ENCODE measurements at regions of chr11 and their contacts with region 1.

Region 1: DNA sequence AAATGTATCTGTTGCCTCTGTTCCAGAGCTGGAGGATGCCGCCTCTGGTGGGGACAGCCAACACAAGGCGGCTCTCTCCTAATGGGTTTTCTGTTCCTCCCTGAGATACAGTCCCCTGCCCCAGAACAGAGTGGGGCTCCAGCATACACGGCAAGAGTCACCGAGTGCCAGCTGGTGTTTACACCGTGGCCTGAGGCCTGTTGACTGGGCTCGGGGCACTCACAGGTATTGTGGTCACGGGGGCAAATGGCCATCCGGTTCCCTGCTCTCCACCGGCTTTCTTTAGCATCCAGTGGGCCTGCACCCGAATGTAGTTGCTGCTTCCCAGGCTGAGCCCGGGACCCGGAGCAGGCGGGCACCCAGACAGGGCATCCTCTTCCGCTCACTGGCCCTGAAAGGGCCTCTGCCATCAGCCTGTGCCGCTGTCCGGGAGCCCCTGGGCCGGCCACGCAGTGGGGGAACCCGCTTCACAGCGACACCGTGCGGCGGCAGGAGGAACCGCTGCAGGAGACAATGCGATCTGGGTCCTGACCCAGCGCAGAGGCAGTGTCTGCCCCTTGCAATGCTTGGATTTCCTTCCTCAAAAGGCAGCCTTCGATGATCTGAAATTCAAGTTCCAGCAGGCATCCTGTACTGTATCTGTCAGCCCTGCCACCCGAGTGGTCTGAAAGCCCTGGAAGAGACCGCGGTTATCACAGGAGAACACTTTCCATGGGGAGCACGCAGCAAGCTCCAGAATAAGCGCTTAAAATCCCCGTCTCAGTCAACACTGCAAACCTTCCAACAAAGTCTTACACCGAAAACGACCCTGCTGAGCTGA is 859 bp upstream of the KRTAP5-5 start:
- DNase-seq: peak; percentile 52
- ATAC-seq: peak; percentile 81
- H3K4me3 Mint-ChIP-seq: no peak overlapping the region
- H3K27ac Mint-ChIP-seq: no peak overlapping the region
- H3K4me1 Mint-ChIP-seq: peaks cover 4% of the 10 kb centered on the region
- H3K27me3 Mint-ChIP-seq: peaks cover 30% of the 10 kb centered on the region
- CTCF ChIP-seq: no peak

Region 2: DNA sequence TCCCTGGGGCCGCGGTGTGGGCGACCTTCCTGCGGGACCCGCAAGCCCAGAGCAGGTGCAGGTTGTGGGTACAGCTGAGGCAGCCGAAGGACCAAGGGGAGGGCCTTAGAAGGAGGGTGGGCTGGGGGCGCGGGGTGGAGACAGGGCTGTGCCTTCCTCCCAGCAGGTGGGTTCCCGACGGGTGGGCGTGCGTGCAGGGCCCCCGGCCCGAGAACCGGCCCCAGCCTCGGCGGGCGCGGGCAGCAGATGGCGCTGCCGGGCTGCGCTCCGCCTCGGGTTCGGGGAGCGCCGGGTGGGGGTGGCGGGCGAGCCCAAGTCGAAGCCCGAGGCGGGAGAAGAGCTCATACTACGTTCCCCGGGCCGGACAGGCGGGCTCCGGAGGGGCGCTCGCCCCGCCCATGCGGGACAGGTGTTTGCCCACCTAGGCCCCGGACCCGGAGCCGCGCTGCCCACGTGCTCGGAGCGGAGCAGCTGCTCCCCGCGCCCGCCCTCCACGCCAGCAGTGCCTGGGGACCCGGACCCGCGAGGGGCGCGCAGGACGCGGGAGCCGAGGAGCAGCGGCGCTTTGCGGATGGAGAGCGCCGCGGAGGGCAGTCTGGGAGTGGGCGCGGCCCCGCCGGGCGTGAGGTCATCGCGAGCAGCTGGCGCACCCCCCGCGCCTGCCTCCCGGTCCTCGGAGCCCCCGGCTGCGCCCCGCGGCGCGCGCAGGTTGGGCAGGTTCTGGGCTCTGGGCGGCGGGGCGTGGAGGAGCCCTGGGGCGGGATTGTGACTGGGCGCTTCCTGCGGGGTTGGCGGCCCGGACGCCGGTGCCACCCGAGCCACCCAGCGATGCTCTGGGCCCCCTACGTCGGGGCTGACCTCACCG is 81.9 kb before region 1 on chr11:
- CTCF ChIA-PET with region 1: interaction called, 3 read pairs
- POLR2A ChIA-PET with region 1: no interaction called
- intact Hi-C with region 1: loop called (anchors 2 kb)
- DNase-seq: peak; percentile 50
- ATAC-seq: peak; percentile 67
- H3K4me3 Mint-ChIP-seq: peak overlapping the region; percentile 19
- H3K27ac Mint-ChIP-seq: no peak overlapping the region
- H3K4me1 Mint-ChIP-seq: peaks cover 13% of the 10 kb centered on the region
- H3K27me3 Mint-ChIP-seq: peaks cover 28% of the 10 kb centered on the region
- CTCF ChIP-seq: no peak

Region 3: DNA sequence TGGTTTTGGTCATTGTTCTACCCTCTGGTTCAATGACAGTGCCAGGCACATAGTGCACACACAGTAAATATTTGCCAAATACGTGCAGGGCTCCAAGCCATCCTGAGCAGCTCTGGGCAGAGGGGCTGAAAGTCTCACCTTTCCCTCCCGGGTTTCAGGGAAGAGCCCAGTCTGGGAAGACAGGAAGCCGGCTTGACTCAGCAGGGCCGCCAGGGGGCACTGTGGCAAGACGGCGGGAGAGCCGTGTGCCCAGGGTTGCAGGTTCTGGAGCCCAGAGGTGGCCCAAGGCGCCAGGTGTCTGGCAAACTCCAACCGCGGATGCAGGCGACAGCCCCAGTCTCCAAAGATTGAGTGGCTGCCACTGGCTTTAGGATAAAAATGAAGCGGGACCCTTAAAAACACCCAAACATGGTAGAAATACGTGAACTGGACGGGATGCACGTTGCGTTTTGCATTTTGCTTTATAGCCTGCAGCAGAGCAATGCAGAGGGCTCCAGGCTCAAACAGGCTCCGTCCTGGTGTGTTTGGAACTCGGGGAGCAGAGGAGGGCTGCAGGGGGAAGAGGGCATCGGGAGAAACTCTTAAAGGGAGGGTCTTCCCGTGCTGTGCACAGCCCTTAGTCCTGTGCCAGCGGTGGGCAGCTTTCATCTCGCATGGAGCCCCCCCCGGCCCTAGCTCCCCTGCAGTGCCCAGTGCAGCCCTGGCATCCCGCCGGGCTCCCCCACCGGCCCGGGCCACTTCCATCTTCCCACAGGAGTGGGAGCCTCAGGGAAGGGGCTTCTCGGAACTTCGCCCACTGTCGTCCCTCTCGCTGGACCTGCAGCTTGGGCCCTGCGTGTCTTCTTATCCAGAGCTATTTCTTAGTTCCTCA is 11.6 kb after region 1 on chr11:
- CTCF ChIA-PET with region 1: interaction called, 11 read pairs
- POLR2A ChIA-PET with region 1: no interaction called
- intact Hi-C with region 1: no loop called
- DNase-seq: no peak
- ATAC-seq: no peak
- H3K4me3 Mint-ChIP-seq: no peak overlapping the region
- H3K27ac Mint-ChIP-seq: no peak overlapping the region
- H3K4me1 Mint-ChIP-seq: peaks cover 2% of the 10 kb centered on the region
- H3K27me3 Mint-ChIP-seq: peaks cover 26% of the 10 kb centered on the region
- CTCF ChIP-seq: no peak

Measured in activated B cell treated with CpG ODN at 0.5 μM for 24 hours (primary cell).